Activated CD4-positive, alpha-beta memory T cell treated with anti-CD3 and anti-CD28 coated beads for 36 hours (primary cell): ENCODE measurements at regions of chr19 and their contacts with region 1.

Region 1: GRCh38 chr19:10695401-10696398 is 5.5 kb upstream of the QTRT1 start:
- DNase-seq: peak; percentile 94
- H3K4me3 Mint-ChIP-seq: peak overlapping the region; percentile 59
- H3K27ac Mint-ChIP-seq: no peak overlapping the region
- H3K4me1 Mint-ChIP-seq: peaks cover 15% of the 10 kb centered on the region
- H3K27me3 Mint-ChIP-seq: peaks cover 13% of the 10 kb centered on the region

Region 2: DNA sequence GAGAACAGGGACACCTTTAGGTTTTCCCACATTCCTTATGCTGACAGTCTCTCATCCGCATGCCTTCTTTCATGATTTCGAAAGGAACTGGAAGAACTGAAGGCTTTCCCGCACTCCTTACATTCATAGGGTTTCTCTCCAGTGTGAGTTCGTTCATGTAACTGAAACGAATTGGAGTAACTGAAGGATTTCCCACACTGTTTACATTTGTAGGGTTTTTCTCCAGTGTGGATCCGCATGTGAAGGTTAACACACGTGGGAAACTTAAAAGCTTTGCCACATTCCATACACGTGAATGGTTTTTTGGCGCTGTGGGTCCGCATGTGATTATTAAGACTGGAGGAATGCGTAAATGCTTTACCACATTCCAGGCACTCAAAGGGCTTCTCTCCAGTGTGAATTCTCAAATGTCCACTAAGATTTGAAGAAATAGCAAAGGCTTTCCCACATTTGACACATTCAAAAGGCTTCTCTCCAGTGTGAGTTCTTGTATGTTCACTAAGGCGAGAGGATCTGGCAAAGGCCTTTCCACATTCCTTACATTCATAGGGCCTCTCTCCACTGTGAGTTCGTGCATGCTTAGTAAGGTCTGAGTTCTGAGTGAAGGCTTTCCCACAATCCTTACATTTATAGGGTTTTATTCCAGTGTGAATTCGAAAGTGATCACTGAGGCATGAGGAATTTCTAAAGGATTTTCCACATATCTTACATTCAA is 1282.3 kb before region 1 on chr19:
- CTCF ChIA-PET with region 1: no interaction called
- POLR2A ChIA-PET with region 1: no interaction called
- intact Hi-C with region 1: no loop called
- DNase-seq: no peak
- H3K4me3 Mint-ChIP-seq: no peak overlapping the region
- H3K27ac Mint-ChIP-seq: no peak overlapping the region
- H3K4me1 Mint-ChIP-seq: no peaks in the 10 kb centered on the region
- H3K27me3 Mint-ChIP-seq: no peaks in the 10 kb centered on the region

Region 3: GRCh38 chr19:10450853-10451609 is 244.7 kb before region 1 on chr19:
- CTCF ChIA-PET with region 1: no interaction called
- POLR2A ChIA-PET with region 1: no interaction called
- intact Hi-C with region 1: no loop called
- DNase-seq: no peak
- H3K4me3 Mint-ChIP-seq: no peak overlapping the region
- H3K27ac Mint-ChIP-seq: no peak overlapping the region
- H3K4me1 Mint-ChIP-seq: no peaks in the 10 kb centered on the region
- H3K27me3 Mint-ChIP-seq: peaks cover 4% of the 10 kb centered on the region

Region 4: GRCh38 chr19:10502524-10503001 is 193.1 kb before region 1 on chr19:
- CTCF ChIA-PET with region 1: interaction called, 5 read pairs
- POLR2A ChIA-PET with region 1: no interaction called
- intact Hi-C with region 1: loop called (anchors 5 kb)
- DNase-seq: peak; percentile 94
- H3K4me3 Mint-ChIP-seq: peak overlapping the region; percentile 90
- H3K27ac Mint-ChIP-seq: peak overlapping the region; percentile 84
- H3K4me1 Mint-ChIP-seq: peaks cover 35% of the 10 kb centered on the region
- H3K27me3 Mint-ChIP-seq: no peaks in the 10 kb centered on the region

Region 5: DNA sequence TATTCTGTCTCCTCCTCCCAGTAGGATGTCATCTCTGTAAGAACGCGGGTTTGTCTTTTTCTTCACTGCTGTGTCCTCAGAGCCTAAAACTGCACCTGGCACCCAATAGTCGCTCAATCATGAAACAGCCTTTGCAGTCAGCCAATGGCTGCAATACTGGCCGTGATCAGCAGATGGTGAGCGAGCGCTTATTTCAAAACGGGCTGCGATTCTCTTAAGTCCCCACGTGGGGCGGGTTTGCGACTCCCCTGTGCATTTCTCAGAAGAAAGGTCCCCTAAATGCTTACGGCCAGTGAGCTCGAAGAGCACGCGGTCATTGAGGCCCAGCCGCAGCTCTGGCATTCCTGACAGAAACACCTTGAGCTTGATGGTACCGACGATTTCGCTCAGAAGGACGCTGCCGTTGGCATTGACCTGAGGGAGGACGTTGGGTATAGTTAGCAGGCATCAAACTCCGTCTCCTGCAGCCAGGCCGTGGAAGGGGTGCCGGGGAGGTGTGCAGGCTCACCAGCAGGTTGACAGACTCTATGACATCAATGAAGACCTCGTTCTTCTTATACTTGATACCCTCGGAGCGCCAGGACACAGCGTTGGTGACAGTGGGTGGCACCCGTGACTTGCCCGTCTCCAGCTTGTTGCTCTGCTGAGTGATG is 114.6 kb before region 1 on chr19:
- CTCF ChIA-PET with region 1: interaction called, 210 read pairs
- POLR2A ChIA-PET with region 1: no interaction called
- intact Hi-C with region 1: loop called (anchors 1 kb)
- DNase-seq: peak; percentile 93
- H3K4me3 Mint-ChIP-seq: peak overlapping the region; percentile 38
- H3K27ac Mint-ChIP-seq: peak overlapping the region; percentile 52
- H3K4me1 Mint-ChIP-seq: peaks cover 4% of the 10 kb centered on the region
- H3K27me3 Mint-ChIP-seq: peaks cover 2% of the 10 kb centered on the region

Region 6: GRCh38 chr19:10631874-10632273 is 63.8 kb before region 1 on chr19:
- CTCF ChIA-PET with region 1: no interaction called
- POLR2A ChIA-PET with region 1: no interaction called
- intact Hi-C with region 1: no loop called
- DNase-seq: no peak
- H3K4me3 Mint-ChIP-seq: no peak overlapping the region
- H3K27ac Mint-ChIP-seq: no peak overlapping the region
- H3K4me1 Mint-ChIP-seq: no peaks in the 10 kb centered on the region
- H3K27me3 Mint-ChIP-seq: no peaks in the 10 kb centered on the region

Region 7: GRCh38 chr19:10644260-10645007 is 51.3 kb before region 1 on chr19:
- CTCF ChIA-PET with region 1: interaction called, 84 read pairs
- POLR2A ChIA-PET with region 1: no interaction called
- intact Hi-C with region 1: no loop called
- DNase-seq: peak; percentile 88
- H3K4me3 Mint-ChIP-seq: no peak overlapping the region
- H3K27ac Mint-ChIP-seq: peak overlapping the region; percentile 59
- H3K4me1 Mint-ChIP-seq: peaks cover 11% of the 10 kb centered on the region
- H3K27me3 Mint-ChIP-seq: no peaks in the 10 kb centered on the region

Region 8: DNA sequence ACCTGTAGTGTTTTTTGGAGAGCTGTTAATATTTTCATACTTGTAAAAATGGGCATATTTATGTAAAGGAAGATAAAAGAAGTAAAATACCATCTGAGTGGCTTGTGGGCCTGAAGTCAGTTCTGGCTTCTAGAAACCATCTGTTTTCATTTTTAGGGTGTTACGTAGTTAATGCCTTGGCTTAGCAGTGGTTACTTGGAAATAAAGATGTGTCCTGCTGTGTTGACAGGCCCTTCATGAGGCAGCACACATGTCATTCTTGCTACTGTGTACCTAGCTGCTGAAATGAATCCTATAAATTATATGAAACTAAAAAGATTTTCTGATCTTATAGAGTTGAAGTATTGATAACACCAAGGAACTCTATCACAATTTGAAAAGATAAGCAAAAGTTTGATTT is 25.5 kb before region 1 on chr19:
- CTCF ChIA-PET with region 1: interaction called, 14 read pairs
- POLR2A ChIA-PET with region 1: no interaction called
- intact Hi-C with region 1: no loop called
- DNase-seq: no peak
- H3K4me3 Mint-ChIP-seq: no peak overlapping the region
- H3K27ac Mint-ChIP-seq: no peak overlapping the region
- H3K4me1 Mint-ChIP-seq: peaks cover 30% of the 10 kb centered on the region
- H3K27me3 Mint-ChIP-seq: no peaks in the 10 kb centered on the region

Region 9: DNA sequence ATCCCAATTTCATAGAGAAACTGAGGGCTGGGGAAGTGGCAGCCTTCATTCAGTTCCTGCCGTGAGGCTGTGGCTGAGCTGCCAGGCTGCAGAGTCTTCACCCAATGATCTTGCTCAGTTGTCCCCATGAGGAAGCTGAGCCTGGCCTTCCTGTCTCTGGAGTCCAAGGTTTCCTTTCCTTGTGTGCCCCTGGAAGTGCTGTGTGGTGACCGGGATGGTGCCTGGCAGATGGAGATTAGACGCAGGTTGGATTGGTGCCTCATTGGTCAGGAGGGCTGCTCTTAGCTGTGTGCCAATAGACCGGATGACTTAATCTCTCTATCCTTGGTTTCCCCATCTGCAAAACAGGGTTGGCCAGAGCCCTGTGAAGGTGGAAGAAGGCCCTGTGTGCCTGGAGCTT is 46.8 kb after region 1 on chr19:
- CTCF ChIA-PET with region 1: no interaction called
- POLR2A ChIA-PET with region 1: no interaction called
- intact Hi-C with region 1: no loop called
- DNase-seq: no peak
- H3K4me3 Mint-ChIP-seq: no peak overlapping the region
- H3K27ac Mint-ChIP-seq: no peak overlapping the region
- H3K4me1 Mint-ChIP-seq: peaks cover 40% of the 10 kb centered on the region
- H3K27me3 Mint-ChIP-seq: no peaks in the 10 kb centered on the region

Region 10: GRCh38 chr19:10835754-10836477 is 140.2 kb after region 1 on chr19 and contains the start of gene TMED1:
- CTCF ChIA-PET with region 1: interaction called, 3 read pairs
- POLR2A ChIA-PET with region 1: no interaction called
- intact Hi-C with region 1: loop called (anchors 5 kb)
- DNase-seq: peak; percentile 98
- H3K4me3 Mint-ChIP-seq: peak within 1 kb of the TSS; percentile 94
- H3K27ac Mint-ChIP-seq: peak within 1 kb of the TSS; percentile 99
- H3K4me1 Mint-ChIP-seq: peaks cover 15% of the 10 kb centered on the region
- H3K27me3 Mint-ChIP-seq: no peaks in the 10 kb centered on the region
- total RNA-seq, gene TMED1: 18.8 to 19.1 TPM